Activated CD4-positive, alpha-beta T cell treated with anti-CD3 and anti-CD28 coated beads for 36 hours (primary cell): ENCODE measurements at regions of chr1 and their contacts with region 1.

Region 1: DNA sequence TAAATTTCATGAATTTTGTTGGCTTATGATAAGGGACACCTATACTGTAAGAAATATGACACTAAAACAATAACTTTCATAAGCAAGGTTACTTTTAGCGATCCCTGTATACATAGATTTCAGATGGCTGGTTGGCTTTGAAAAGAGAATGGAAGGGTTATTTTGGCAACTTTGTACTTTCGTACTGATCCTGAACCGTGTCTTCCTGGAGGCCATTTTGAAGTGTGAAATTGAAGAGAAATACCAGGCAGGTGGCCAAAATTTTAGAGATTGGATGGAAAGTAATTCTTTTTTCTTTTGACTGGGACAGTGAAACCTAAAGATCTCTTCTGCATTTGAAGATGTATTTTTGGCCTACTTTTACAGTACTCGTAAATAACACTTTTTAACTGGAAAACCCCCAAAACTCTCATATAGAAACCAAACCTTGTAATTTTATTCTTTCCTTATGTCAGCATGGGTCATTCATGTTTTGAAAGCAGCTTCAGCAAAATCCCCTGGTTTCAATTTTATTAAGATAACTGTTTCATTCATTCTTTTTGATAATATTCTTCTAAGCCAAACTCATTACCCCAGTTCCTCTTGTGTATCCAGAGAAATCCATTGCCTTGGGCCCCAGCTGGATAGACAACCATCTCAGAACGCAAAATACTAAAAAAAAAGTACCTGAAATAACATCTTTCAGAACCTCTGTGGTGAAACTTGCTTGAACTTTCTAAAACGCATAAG is 38.4 kb upstream of the ZNF281 start:
- DNase-seq: peak; percentile 15
- ATAC-seq: peak; percentile 75
- H3K4me3 Mint-ChIP-seq: no peak overlapping the region
- H3K27ac Mint-ChIP-seq: peak overlapping the region; percentile 92
- H3K4me1 Mint-ChIP-seq: peaks cover 44% of the 10 kb centered on the region
- H3K27me3 Mint-ChIP-seq: peaks cover 7% of the 10 kb centered on the region

Region 2: DNA sequence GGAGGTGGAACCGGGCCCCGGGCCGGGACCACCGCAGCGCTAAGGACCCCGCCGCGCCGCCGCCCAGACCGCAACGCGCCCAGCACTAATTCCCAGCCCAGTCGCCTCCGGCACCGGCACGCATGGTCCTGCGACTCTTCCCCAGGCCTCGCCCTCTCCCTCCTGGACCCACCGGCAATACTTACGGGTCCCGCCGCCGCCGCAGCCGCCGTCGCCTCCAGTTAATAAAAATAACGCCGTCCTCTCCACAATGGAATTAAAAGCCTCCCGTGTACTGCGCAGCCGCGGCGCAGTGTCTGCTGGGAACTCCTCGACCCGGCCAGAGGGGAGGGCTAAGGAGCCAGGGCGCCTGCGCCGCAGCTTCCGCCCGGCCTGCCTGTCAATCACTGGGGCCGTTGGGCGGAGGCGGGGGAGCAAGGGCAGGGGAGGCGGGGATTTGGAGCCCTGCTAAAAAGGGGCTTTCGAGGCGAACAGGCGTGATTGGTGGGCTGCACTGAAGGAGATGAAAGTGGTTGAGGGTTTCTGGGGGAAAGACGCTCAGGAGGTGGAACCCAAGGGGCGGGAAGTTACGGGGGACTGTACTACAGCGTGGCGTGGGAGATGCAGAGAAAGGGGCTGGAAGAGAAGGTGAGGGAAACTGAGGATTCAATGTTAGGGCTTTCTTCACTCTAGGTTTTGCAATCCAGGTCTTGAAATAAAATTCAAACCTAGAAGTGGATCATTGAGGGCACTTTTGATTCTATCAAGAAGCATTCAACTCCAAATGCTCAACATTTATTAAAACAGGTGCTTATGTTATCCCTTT is 38.2 kb before region 1 on chr1 and contains the start of gene ZNF281:
- CTCF ChIA-PET with region 1: no interaction called
- POLR2A ChIA-PET with region 1: no interaction called
- intact Hi-C with region 1: loop called (anchors 1 to 5 kb)
- DNase-seq: peak; percentile 97
- ATAC-seq: peak; percentile 99
- H3K4me3 Mint-ChIP-seq: peak within 1 kb of the TSS; percentile 80
- H3K27ac Mint-ChIP-seq: peak within 1 kb of the TSS; percentile 93
- H3K4me1 Mint-ChIP-seq: peaks cover 49% of the 10 kb centered on the region
- H3K27me3 Mint-ChIP-seq: no peaks in the 10 kb centered on the region
- total RNA-seq, gene ZNF281: 10.8 to 13.5 TPM

Region 3: GRCh38 chr1:200473698-200474371 is 25.6 kb after region 1 on chr1:
- CTCF ChIA-PET with region 1: interaction called, 4 read pairs
- POLR2A ChIA-PET with region 1: no interaction called
- intact Hi-C with region 1: loop called (anchors 1 kb)
- DNase-seq: peak; percentile 55
- ATAC-seq: peak; percentile 80
- H3K4me3 Mint-ChIP-seq: peak overlapping the region; percentile 32
- H3K27ac Mint-ChIP-seq: peak overlapping the region; percentile 48
- H3K4me1 Mint-ChIP-seq: peaks cover 47% of the 10 kb centered on the region
- H3K27me3 Mint-ChIP-seq: peaks cover 8% of the 10 kb centered on the region